ENCODE measurements at regions of chr4 and their contacts with region 1.

Region 1: GRCh38 chr4:1512738-1513660 is 106.8 kb upstream of the NKX1-1 start:
- DNase-seq: no peak
- H3K4me3 ChIP-seq: no peak overlapping the region
- H3K27me3 ChIP-seq: peaks cover 15% of the 10 kb centered on the region
- CTCF ChIP-seq: peak; percentile 18; the same call in 1 of the 2 replicates

Region 2: DNA sequence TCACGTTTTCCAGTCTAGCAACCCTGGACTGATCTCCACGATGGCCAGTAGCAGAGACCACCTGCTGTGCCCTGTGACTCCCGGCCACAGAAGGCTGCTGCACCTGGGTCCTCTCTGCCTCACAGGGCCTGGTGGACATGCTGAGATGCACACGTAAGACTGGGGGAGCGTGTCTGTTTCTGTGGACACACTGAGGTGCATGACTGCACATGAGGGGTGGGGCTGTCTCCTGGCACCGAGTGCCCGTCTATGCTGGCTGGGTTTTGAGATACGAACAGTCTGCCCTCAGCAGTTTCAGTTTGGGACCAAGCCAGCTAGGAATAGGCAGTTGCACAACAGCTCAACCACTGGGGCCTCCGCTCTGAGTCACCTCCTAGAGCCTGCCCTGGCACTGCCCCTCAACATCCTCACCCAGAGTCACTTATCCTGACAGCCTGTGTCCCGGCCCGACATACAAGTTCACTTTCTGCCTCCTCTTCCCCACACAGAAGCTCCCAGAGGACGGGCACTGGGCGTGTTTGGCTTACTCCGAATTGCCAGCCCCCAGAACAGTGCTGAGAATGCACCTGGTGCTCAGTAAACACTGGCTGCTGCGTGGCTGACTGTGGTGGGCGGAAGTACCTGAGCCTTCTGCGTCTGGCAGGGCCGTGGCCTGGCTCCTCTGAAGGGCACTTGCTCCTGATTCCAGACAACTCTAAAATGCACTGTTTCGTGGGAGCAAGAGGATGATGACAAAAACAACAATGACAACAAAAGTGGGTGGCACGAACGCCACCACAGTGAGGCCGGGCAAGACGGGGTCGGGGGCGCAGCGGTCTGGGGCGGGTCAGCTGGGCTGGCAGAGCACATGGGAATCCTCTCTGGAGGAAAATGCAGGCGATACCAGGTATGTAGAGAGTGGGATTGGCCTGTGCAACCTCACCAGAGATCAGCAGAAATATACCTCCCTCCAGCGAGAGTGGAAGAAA is 430.5 kb before region 1 on chr4:
- CTCF ChIA-PET with region 1: no interaction called
- POLR2A ChIA-PET with region 1: no interaction called
- DNase-seq: no peak
- H3K4me3 ChIP-seq: no peak overlapping the region
- H3K27me3 ChIP-seq: peaks cover 6% of the 10 kb centered on the region
- CTCF ChIP-seq: no peak

Region 3: GRCh38 chr4:1351854-1352633 is 161.0 kb before region 1 on chr4:
- CTCF ChIA-PET with region 1: interaction called, 26 read pairs
- POLR2A ChIA-PET with region 1: no interaction called
- DNase-seq: no peak
- H3K4me3 ChIP-seq: no peak overlapping the region
- H3K27me3 ChIP-seq: no peaks in the 10 kb centered on the region
- CTCF ChIP-seq: peak; percentile 96

Region 4: GRCh38 chr4:1523907-1524636 is 11.1 kb after region 1 on chr4:
- CTCF ChIA-PET with region 1: interaction called, 10 read pairs
- POLR2A ChIA-PET with region 1: no interaction called
- DNase-seq: no peak
- H3K4me3 ChIP-seq: no peak overlapping the region
- H3K27me3 ChIP-seq: peaks cover 6% of the 10 kb centered on the region
- CTCF ChIP-seq: no peak

Region 5: GRCh38 chr4:1842993-1843448 is 330.0 kb after region 1 on chr4:
- CTCF ChIA-PET with region 1: no interaction called
- POLR2A ChIA-PET with region 1: no interaction called
- DNase-seq: peak; percentile 61
- H3K4me3 ChIP-seq: no peak overlapping the region
- H3K27me3 ChIP-seq: no peaks in the 10 kb centered on the region
- CTCF ChIP-seq: no peak

Measured in BJ (cell line).